Pancreas (tissue), 10 donors: ENCODE measurements at regions of chr10 and their contacts with region 1.

Region 1: GRCh38 chr10:112949875-112950507 is at the start of gene TCF7L2:
- DNase-seq: peak; percentile 90 to 98 (median 96)
- ATAC-seq: peak; percentile 84 to 89 (median 85)
- H3K4me3 ChIP-seq: peak within 1 kb of the TSS; percentile 39 to 84 (median 75)
- H3K27ac ChIP-seq: peak within 1 kb of the TSS; percentile 63 to 95 (median 86)
- H3K4me1 ChIP-seq: peaks cover 6 to 15% (median 11%) of the 10 kb centered on the region in 3 donors
- H3K27me3 ChIP-seq: no peaks in the 10 kb centered on the region
- CTCF ChIP-seq: no peak
- total RNA-seq, gene TCF7L2: 7.9 to 22.3 (median 11.6) TPM

Region 2: GRCh38 chr10:112741830-112742411 is 208.1 kb before region 1 on chr10:
- intact Hi-C with region 1: no loop called
- DNase-seq: no peak
- ATAC-seq: peak in 3 of 4 donors; percentile 29 to 43 (median 35)
- H3K4me3 ChIP-seq: no peak overlapping the region
- H3K27ac ChIP-seq: peak overlapping the region in 1 of 4 donors; percentile 31
- H3K4me1 ChIP-seq: peaks cover 8 to 54% (median 34%) of the 10 kb centered on the region in 3 donors
- H3K27me3 ChIP-seq: no peaks in the 10 kb centered on the region
- CTCF ChIP-seq: no peak

Region 3: DNA sequence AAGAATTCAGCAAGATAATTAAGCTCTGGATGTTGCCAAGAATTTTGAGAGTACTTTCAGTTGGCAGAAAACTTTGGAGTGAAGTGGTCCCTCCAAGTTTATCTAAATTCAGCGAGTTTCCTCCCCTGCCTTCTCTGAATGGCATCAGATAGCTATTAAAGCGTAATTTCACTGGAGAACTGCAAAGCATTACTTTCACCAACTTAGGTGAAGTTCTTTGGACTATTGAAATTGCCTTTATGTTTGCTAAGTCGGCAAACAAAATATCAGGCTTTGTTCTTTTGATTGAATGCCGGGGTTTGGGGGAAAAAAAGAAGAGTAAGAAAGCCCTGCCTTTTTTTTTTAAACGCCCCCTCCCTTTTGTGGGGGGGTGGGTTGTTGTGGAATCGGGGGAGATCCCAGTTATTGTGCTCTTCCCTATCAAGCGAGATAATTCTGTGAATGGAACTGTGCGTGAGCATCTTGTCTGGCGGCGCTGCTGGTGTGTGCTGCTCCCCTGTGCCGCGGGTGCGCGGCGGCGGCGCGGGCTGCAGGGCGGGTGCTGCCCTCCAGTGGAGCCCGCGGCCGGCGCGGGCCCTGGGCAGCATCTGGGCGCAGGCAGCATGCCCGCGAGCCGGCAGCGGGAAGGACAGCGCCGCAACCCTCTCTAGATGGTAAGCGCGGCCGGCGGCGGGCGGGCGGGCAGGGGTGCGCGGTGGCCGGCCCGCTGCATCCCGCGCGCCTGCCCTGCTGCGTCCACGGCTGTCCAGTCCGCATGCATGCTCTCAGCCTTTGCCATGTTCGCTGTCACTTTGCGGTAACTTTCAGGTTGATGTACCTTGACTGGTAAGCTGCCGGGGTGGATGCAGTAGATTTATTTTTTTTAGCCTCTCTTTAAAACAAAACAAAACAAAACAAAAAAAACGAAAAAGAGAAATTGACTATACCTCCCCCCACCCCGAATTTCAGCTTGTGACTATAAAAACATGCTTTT is 176.5 kb after region 1 on chr10:
- intact Hi-C with region 1: loop called in 2 of 3 experiments (anchors 10 kb)
- DNase-seq: peak; percentile 54 to 91 (median 72)
- ATAC-seq: peak; percentile 99 to 100 (median 100)
- H3K4me3 ChIP-seq: peak overlapping the region in 2 of 4 donors; percentile 25 to 34
- H3K27ac ChIP-seq: no peak overlapping the region
- H3K4me1 ChIP-seq: peaks cover 3 to 9% (median 4%) of the 10 kb centered on the region in 3 donors
- H3K27me3 ChIP-seq: no peaks in the 10 kb centered on the region
- CTCF ChIP-seq: peak; percentile 63 to 76 (median 70)

Region 4: DNA sequence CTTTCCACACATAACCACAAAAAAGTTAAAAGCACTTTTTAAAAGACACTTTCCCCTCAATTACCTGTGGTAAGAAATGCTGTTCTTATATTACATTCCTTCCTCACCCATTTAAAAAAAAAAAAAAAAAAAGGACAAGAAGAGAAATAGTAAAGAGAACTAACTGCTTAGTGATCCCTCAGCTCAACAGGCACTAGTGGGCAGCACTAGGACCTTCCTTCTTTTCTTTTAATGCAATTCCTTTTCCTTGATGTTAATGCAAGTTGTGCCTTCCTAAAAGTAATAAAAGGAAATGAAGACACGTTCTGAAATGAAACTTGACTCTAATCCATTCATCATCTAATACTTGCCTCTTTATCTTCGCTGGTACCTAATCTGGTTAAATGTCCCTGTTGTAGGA is 189.7 kb after region 1 on chr10:
- intact Hi-C with region 1: loop called in 1 of 3 experiments (anchors 10 kb)
- DNase-seq: no peak
- ATAC-seq: no peak
- H3K4me3 ChIP-seq: no peak overlapping the region
- H3K27ac ChIP-seq: no peak overlapping the region
- H3K4me1 ChIP-seq: no peaks in the 10 kb centered on the region
- H3K27me3 ChIP-seq: no peaks in the 10 kb centered on the region
- CTCF ChIP-seq: no peak